ENCODE measurements at regions of chr6 and their contacts with region 1.

Region 1: DNA sequence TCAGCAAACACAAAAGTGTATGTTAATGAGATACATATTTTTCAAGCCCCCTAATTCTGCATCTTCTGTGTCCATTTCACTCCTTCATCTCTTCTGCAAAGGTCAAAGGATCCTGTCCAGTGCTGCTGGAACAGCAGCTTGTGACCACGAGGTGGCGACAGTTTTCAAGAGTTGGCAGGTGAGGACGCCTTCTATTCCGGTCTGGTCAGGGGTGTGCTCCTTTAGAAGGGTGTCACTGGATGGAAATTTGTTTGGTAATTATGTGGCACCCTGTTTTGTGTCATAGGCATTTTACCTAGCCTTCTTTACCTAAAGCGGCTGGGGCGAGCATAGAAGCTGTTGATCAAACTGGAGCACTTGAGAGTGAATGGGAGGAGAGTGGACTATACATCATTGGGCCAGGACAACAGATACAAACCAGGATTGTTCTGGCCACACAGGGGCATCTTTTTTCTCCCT is 32.9 kb upstream of the ERVFRD-1 start:
- DNase-seq: peak; percentile 89
- H3K4me3 Mint-ChIP-seq: no peak overlapping the region
- H3K27ac Mint-ChIP-seq: no peak overlapping the region
- H3K4me1 Mint-ChIP-seq: peaks cover 7% of the 10 kb centered on the region
- H3K27me3 Mint-ChIP-seq: no peaks in the 10 kb centered on the region

Region 2: GRCh38 chr6:11163932-11164331 is 19.5 kb after region 1 on chr6:
- CTCF ChIA-PET with region 1: no interaction called
- intact Hi-C with region 1: no loop called
- DNase-seq: no peak
- H3K4me3 Mint-ChIP-seq: no peak overlapping the region
- H3K27ac Mint-ChIP-seq: no peak overlapping the region
- H3K4me1 Mint-ChIP-seq: peaks cover 4% of the 10 kb centered on the region
- H3K27me3 Mint-ChIP-seq: no peaks in the 10 kb centered on the region

Region 3: GRCh38 chr6:11414176-11414963 is 269.9 kb after region 1 on chr6:
- CTCF ChIA-PET with region 1: no interaction called
- intact Hi-C with region 1: loop called (anchors 2 kb)
- DNase-seq: peak; percentile 60
- H3K4me3 Mint-ChIP-seq: no peak overlapping the region
- H3K27ac Mint-ChIP-seq: no peak overlapping the region
- H3K4me1 Mint-ChIP-seq: peaks cover 33% of the 10 kb centered on the region
- H3K27me3 Mint-ChIP-seq: no peaks in the 10 kb centered on the region

Region 4: GRCh38 chr6:11575408-11576033 is 431.1 kb after region 1 on chr6:
- CTCF ChIA-PET with region 1: interaction called, 4 read pairs
- intact Hi-C with region 1: loop called (anchors 1 kb)
- DNase-seq: peak; percentile 75
- H3K4me3 Mint-ChIP-seq: no peak overlapping the region
- H3K27ac Mint-ChIP-seq: no peak overlapping the region
- H3K4me1 Mint-ChIP-seq: no peaks in the 10 kb centered on the region
- H3K27me3 Mint-ChIP-seq: no peaks in the 10 kb centered on the region